Ascending aorta (tissue), 2 donors: ENCODE measurements at regions of chr17 and their contacts with region 1.

Region 1: DNA sequence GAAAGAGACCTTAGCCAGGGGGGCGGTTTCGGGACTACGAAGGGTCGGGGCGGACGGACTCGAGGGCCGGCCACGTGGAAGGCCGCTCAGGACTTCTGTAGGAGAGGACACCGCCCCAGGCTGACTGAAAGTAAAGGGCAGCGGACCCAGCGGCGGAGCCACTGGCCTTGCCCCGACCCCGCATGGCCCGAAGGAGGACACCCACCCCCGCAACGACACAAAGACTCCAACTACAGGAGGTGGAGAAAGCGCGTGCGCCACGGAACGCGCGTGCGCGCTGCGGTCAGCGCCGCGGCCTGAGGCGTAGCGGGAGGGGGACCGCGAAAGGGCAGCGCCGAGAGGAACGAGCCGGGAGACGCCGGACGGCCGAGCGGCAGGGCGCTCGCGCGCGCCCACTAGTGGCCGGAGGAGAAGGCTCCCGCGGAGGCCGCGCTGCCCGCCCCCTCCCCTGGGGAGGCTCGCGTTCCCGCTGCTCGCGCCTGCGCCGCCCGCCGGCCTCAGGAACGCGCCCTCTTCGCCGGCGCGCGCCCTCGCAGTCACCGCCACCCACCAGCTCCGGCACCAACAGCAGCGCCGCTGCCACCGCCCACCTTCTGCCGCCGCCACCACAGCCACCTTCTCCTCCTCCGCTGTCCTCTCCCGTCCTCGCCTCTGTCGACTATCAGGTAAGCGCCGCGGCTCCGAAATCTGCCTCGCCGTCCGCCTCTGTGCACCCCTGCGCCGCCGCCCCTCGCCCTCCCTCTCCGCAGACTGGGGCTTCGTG is at the start of gene MAPT:
- DNase-seq: peak; percentile 27 to 93
- H3K4me3 ChIP-seq: peak within 1 kb of the TSS; percentile 70 to 84
- H3K27ac ChIP-seq: no peak within 1 kb of the TSS
- H3K4me1 ChIP-seq: peaks cover 6 to 25% of the 10 kb centered on the region in 2 donors
- H3K27me3 ChIP-seq: peaks cover 6% of the 10 kb centered on the region
- CTCF ChIP-seq: peak; percentile 68 to 97 (median 79)
- total RNA-seq, gene MAPT: 0.32 TPM

Region 2: DNA sequence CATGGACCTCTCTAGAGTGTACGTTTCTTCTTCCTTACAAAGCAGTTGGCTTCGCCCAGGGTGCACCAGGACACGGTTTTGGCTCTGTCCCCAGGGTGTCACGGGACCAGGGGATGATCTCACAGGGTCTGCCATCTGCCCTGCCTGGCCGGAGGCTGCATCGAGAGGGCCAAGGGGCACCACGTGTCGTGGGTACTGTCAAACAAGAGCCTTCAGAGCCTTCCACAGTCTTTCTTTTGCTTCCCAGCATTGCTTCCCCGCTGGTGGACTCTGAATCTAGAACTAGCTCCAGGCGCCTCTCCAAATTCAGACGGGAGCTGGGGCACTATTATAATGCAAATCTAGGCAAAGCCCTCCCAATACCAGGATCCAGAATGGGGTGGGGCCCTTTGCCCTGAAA is 48.1 kb after region 1 on chr17:
- intact Hi-C with region 1: loop called (anchors 5 kb)
- DNase-seq: peak; percentile 27 to 78
- H3K4me3 ChIP-seq: no peak overlapping the region
- H3K27ac ChIP-seq: no peak overlapping the region
- H3K4me1 ChIP-seq: peaks cover 2 to 10% of the 10 kb centered on the region in 2 donors
- H3K27me3 ChIP-seq: no peaks in the 10 kb centered on the region
- CTCF ChIP-seq: no peak